Left ventricle myocardium inferior (tissue), 1 donor: ENCODE measurements at regions of chr22 and their contacts with region 1.

Region 1: DNA sequence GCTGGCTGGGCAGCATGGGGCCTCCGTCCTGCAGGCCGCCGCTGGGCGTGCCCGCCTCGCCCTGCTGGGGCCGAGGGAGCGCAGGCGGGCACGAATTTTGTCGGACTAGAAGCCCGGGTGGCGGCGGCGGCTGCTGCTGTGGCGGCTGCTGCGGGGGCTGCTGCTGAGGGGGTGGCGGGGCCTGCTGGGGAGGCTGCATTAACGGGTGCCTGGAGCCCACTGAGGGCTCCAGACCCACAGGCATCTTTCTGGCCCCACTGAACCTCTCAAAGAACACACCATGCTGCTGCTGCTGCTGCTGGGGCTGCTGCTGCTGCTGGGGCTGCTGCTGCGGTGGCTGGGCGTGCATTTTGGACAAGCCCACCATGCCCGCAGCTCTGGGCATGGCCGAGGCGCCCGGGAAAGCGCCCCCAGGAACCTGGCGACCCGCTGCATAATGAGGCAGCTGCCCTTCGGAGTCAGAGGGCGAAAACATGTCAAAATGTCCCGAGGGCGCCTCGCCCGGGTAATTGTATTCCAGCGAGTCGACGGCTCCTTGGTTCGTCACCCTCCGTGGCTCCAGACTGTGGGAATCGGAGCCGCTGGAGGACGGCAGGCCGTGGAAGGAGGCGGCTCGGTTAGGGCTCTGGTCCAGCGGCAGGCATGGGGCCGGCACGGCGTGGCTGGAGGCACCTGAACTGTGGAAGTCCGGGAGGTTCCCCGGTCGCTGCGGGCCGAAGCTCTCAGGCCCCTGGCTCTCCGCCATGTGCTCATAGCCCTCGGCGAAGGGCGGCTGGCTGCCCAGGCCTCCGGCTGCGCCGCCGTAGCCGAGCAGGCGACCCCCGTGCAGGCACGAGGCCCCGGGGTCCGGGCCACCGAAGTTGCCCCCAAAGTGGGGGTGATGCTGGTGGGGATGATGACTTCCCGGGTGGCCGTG is 2.0 kb downstream of the MN1 start:
- DNase-seq: peak; percentile 34
- H3K4me3 ChIP-seq: peak overlapping the region; percentile 92
- H3K27ac ChIP-seq: peak overlapping the region; percentile 93
- H3K4me1 ChIP-seq: peaks cover 87% of the 10 kb centered on the region
- H3K27me3 ChIP-seq: peaks cover 49% of the 10 kb centered on the region
- CTCF ChIP-seq: no peak

Region 2: GRCh38 chr22:27668828-27669797 is 130.5 kb before region 1 on chr22:
- intact Hi-C with region 1: loop called (anchors 10 kb)
- DNase-seq: peak; percentile 87
- H3K4me3 ChIP-seq: no peak overlapping the region
- H3K27ac ChIP-seq: peak overlapping the region; percentile 94
- H3K4me1 ChIP-seq: peaks cover 45% of the 10 kb centered on the region
- H3K27me3 ChIP-seq: no peaks in the 10 kb centered on the region
- CTCF ChIP-seq: no peak